Activated CD4-positive, alpha-beta memory T cell treated with anti-CD3 and anti-CD28 coated beads for 36 hours (primary cell): ENCODE measurements at regions of chrX and their contacts with region 1.

Region 1: DNA sequence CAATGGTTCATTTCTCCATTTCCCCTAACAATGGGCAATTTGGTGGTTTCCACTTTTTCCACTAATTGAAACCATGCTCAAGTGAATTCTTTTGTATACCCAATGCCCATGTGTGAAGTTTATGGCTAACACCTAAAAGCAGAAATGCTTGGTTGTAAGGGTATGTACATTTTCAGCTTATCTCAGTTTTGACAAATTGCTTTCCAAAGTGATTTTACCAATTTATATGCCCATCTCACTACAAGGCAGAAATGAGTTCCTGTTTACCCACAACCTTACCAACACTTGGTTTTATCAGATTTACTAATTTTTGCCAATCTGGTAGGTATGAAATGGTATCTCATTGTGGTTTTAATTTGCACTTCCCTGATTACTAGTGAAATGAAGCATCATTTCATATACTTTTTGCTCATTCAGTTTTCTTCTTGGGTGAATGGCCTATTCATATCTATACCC is 14.8 kb downstream of the GPR34 start:
- DNase-seq: no peak
- H3K4me3 Mint-ChIP-seq: no peak overlapping the region
- H3K27ac Mint-ChIP-seq: no peak overlapping the region
- H3K4me1 Mint-ChIP-seq: peaks cover 40% of the 10 kb centered on the region
- H3K27me3 Mint-ChIP-seq: no peaks in the 10 kb centered on the region

Region 2: GRCh38 chrX:41600291-41600690 is 103.3 kb before region 1 on chrX:
- CTCF ChIA-PET with region 1: no interaction called
- POLR2A ChIA-PET with region 1: no interaction called
- intact Hi-C with region 1: no loop called
- DNase-seq: no peak
- H3K4me3 Mint-ChIP-seq: no peak overlapping the region
- H3K27ac Mint-ChIP-seq: no peak overlapping the region
- H3K4me1 Mint-ChIP-seq: peaks cover 9% of the 10 kb centered on the region
- H3K27me3 Mint-ChIP-seq: no peaks in the 10 kb centered on the region

Region 3: DNA sequence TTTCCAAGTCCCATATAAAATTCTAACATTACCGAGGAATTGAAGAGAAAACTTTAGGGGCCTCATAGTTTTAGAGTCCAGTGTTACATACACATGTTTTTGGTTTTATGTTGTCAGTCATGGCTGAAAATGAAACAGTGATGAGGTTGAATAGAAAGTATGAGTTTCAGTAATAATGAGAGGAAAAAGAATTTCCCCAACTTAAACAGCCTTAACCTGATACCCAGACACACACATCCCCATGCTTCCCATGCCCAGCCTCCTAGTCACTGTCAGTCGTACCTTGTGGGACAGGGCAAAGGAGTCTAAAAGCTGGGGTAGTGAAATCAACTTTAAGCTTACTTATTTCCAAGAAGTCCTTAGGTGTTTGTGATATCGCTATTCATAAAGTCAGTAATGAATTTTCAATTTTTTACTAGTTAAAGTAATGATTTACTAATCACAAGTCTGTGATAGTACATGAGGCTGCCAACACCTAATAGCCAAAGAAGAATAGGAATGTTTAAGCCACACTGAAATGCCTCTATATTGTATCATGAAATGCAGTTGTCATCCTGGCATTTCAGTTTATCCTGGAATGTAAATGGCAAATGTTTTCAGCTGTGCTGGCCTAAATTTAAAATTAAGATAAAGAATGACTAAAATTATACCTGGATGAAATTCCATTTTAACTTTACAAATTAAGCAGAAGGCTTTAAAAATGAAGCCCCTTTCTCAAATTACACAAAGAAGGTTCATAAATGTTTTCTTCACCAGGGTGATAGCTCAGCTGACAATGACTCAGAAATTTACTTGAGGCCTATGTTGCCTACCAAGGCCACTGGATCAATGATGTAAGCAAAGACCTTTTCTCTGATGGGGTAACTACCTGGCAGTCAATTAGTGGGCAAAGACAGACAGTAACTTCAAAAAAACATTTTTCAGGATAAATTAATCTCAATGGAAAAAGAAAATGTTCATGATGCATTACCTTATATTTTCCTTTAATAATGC is 39.0 kb before region 1 on chrX:
- CTCF ChIA-PET with region 1: no interaction called
- POLR2A ChIA-PET with region 1: no interaction called
- intact Hi-C with region 1: loop called (anchors 5 kb)
- DNase-seq: peak; percentile 33
- H3K4me3 Mint-ChIP-seq: no peak overlapping the region
- H3K27ac Mint-ChIP-seq: peak overlapping the region; percentile 73
- H3K4me1 Mint-ChIP-seq: peaks cover 47% of the 10 kb centered on the region
- H3K27me3 Mint-ChIP-seq: no peaks in the 10 kb centered on the region

Region 4: DNA sequence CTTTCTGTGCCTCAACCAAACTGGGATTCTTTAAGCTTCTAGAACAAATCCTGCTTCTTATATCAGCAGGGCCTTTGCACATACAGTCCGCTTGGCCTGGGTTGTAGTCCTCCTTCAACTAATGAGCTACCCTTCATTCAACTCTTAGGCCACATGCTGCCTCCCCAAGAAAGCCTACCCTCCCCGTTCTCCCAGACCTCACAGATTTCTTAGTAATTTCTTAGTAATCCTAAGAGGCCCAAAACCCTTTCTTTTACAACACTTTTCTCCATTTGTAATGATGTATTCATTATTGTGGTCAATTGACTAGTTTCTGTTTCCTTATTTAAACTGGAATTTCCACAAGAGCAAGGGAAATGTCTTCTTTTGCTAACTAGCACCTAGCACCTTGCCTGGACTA is 841.3 kb after region 1 on chrX:
- CTCF ChIA-PET with region 1: no interaction called
- POLR2A ChIA-PET with region 1: no interaction called
- intact Hi-C with region 1: no loop called
- DNase-seq: no peak
- H3K4me3 Mint-ChIP-seq: no peak overlapping the region
- H3K27ac Mint-ChIP-seq: no peak overlapping the region
- H3K4me1 Mint-ChIP-seq: peaks cover 4% of the 10 kb centered on the region
- H3K27me3 Mint-ChIP-seq: no peaks in the 10 kb centered on the region